ENCODE measurements at regions of chr14 and their contacts with region 1.

Region 1: GRCh38 chr14:23095196-23096108 is at the start of gene C14orf119:
- DNase-seq: peak; percentile 100
- ATAC-seq: peak; percentile 91
- H3K4me3 Mint-ChIP-seq: no peak within 1 kb of the TSS
- H3K27ac Mint-ChIP-seq: no peak within 1 kb of the TSS
- H3K4me1 Mint-ChIP-seq: peaks cover 37% of the 10 kb centered on the region
- H3K27me3 Mint-ChIP-seq: no peaks in the 10 kb centered on the region; the same call in 1 of the 2 replicates
- CTCF ChIP-seq: no peak
- total RNA-seq, gene C14orf119: 67.8 to 81.3 TPM (median 71.3 TPM) in 3 replicates

Region 2: DNA sequence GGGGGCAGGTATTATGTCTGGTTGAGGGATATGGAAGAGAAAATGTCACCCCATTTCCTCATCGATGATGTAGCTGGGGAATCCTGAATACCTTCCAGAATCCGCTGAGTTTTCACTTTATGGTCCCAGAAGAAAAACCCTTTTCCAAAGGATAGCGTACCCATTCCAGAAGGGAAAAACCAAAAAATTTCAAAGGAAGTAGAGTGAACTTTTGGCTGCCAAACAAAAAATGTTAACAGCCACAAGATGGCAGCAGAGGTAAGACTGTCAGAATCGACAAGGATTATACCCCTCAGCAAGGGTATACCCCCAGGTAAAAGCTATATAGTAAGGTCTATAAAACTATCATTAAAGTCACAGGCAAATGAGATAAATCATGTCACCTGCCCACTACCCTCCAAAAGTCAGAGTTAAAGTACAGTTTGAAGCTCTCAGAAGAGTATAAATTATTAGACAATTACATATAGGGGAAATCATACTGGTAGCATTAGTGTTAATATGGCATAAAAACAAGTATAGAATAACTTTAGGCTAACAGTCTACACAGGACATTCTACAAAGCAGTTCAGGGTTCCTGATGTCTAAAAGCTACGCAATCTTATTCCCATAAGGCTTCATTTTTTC is 18.6 kb before region 1 on chr14:
- CTCF ChIA-PET with region 1: interaction called, 35 read pairs
- POLR2A ChIA-PET with region 1: interaction called, 24 read pairs
- DNase-seq: no peak
- ATAC-seq: peak; percentile 59
- H3K4me3 Mint-ChIP-seq: no peak overlapping the region
- H3K27ac Mint-ChIP-seq: no peak overlapping the region
- H3K4me1 Mint-ChIP-seq: peaks cover 12% of the 10 kb centered on the region
- H3K27me3 Mint-ChIP-seq: no peaks in the 10 kb centered on the region
- CTCF ChIP-seq: peak; percentile 45

Region 3: DNA sequence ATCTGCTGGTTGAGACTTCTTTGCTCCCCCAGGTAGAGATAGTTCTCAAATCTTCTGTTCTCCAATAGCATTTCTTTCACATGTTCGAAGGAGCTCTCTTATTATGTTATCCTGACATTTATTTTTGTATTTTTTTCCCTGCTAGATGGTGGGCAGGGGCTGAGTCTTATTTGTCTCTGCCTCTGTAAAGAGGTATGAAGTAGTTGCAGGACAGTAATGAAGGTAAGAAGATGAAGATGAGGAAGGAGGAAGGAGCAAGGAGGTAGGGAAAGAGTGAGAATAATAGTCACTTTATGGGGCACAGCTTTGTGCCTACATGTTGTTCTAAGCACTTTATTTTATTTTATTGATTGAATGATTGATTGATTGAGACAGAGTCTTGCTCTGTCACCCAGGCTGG is 14.3 kb after region 1 on chr14:
- CTCF ChIA-PET with region 1: interaction called, 13 read pairs
- POLR2A ChIA-PET with region 1: interaction called, 7 read pairs
- DNase-seq: no peak
- ATAC-seq: no peak
- H3K4me3 Mint-ChIP-seq: no peak overlapping the region
- H3K27ac Mint-ChIP-seq: no peak overlapping the region
- H3K4me1 Mint-ChIP-seq: peaks cover 33% of the 10 kb centered on the region
- H3K27me3 Mint-ChIP-seq: peaks cover 14% of the 10 kb centered on the region
- CTCF ChIP-seq: no peak

Region 4: DNA sequence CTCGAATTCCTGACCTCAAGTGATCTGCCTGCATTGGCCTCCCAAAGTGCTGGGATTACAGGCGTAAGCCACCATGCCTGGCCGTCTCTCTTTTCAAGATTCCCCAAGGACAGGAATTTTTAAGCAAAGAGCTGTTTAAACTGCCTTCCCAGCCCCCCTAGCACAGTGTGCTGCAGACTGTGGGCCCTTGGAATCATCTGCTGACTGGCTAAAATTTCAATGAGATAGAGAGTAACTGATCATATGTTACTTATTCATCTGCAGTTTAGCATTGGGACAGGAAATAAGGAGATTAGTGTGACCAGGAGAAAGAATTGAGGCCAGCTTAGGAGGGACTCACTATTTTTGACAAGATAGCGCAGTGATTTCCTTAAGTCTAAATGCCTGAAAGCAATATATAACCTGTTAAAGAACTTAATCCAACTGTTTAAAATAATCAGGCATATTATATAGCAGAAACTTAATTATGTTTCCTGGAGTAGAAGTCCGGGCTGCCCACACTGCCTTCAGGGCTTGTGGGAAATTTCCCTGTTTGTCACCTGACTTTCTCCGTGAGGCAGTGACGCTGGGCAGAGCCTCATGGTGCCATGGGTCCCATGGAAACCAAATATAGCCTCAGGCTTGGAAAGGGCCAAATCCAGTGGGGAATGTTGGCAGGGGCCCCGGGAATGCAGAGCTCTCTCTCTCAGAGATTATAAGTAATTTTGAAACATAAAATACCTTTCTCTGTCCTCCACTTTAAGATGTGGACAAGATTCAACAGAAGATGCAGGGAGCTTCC is 46.4 kb after region 1 on chr14:
- CTCF ChIA-PET with region 1: no interaction called
- POLR2A ChIA-PET with region 1: no interaction called
- DNase-seq: no peak
- ATAC-seq: no peak
- H3K4me3 Mint-ChIP-seq: no peak overlapping the region
- H3K27ac Mint-ChIP-seq: peak overlapping the region; percentile 52; the same call in 1 of the 2 replicates
- H3K4me1 Mint-ChIP-seq: peaks cover 6% of the 10 kb centered on the region
- H3K27me3 Mint-ChIP-seq: no peaks in the 10 kb centered on the region
- CTCF ChIP-seq: no peak

Region 5: DNA sequence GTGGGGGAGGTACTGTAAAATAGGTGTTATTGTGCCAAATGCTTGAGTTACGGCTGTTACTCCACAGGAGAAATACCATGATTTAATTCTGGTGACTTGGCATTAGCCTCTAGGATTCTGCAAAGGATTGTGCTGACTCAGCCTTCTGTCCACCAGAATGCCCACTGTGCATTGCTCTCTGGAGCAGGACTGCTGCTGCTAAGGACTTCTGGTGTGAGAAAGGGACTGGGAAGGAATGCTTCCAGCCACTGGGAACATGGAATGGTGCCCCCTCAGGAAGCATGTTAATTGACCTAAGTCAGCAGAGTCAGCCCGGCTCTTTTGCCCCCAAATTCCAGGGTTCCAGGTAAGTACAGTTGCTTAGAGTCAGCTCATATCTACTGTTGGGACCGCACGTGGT is 423.3 kb after region 1 on chr14:
- CTCF ChIA-PET with region 1: no interaction called
- POLR2A ChIA-PET with region 1: no interaction called
- DNase-seq: no peak
- ATAC-seq: peak; percentile 66
- H3K4me3 Mint-ChIP-seq: no peak overlapping the region
- H3K27ac Mint-ChIP-seq: no peak overlapping the region
- H3K4me1 Mint-ChIP-seq: peaks cover 55% of the 10 kb centered on the region
- H3K27me3 Mint-ChIP-seq: peaks cover 38% of the 10 kb centered on the region
- CTCF ChIP-seq: no peak

Measured in WTC11 (cell line).